ENCODE measurements at regions of chr20 and their contacts with region 1.

Region 1: DNA sequence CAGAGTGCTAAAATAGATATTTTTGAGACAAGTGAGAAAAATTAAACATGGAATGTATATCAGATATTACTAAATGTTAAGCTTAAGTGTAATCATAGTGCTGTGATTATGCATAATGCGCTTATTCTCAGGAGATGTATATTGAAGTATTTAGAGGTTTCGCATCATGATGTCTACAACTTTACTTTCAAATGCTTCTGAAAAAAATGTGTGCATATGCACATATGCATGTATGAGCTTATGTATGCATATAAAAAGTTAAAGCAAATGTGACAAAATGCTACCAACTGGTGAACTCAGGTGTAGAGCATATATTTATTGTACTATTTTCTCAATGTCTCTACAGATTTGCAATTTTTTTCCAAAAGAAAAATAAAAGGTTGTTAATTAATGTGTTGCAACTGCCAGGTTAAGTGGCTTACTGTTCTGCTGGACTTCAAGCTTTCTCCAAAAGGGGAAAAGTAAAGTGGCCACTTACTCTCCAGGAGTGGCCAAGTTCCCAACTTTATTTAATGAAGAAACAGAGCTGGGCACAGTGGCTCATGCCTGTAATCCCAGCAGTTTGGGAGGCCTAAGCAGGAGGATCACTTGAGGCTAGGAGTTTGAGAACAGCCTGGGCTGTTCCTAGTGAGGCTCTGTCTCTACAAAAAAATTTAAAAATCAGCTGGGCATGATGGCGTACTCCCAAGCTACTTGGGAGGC is 48.9 kb downstream of the B4GALT5 start:
- DNase-seq: no peak
- H3K4me3 ChIP-seq: no peak overlapping the region
- H3K27ac ChIP-seq: no peak overlapping the region
- H3K4me1 ChIP-seq: peaks cover 6% of the 10 kb centered on the region
- H3K27me3 ChIP-seq: no peaks in the 10 kb centered on the region
- CTCF ChIP-seq: no peak
- EP300 ChIP-seq: no peak
- POLR2A ChIP-seq: no peak

Region 2: GRCh38 chr20:48669946-48670605 is 994.7 kb before region 1 on chr20:
- intact Hi-C with region 1: no loop called
- DNase-seq: no peak
- H3K4me3 ChIP-seq: no peak overlapping the region
- H3K27ac ChIP-seq: no peak overlapping the region
- H3K4me1 ChIP-seq: peaks cover 9% of the 10 kb centered on the region
- H3K27me3 ChIP-seq: no peaks in the 10 kb centered on the region
- CTCF ChIP-seq: no peak
- EP300 ChIP-seq: no peak
- POLR2A ChIP-seq: no peak

Region 3: DNA sequence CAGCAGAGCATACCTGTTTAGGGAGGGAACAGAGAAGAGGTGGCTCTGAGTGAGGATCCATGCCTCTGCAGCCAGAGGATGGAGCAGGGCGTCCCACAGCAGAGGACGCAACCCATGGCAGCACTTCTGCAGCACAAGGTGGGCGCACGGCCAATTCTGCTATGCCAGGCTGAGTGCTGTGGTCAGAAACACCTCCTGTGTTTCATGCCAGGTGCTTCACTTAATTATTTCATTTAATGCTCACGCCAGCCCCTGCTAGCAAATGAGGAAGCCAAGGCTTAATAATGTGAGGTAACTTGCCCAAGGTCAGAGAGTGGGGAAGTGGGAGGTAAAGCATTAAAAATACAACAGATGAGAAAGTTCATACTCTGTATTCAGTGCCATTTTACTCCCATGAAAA is 28.3 kb before region 1 on chr20:
- intact Hi-C with region 1: loop called in 1 of 4 experiments (anchors 2 kb)
- DNase-seq: peak in 4 of 5 donors; percentile 47 to 68 (median 57)
- H3K4me3 ChIP-seq: no peak overlapping the region
- H3K27ac ChIP-seq: peak overlapping the region in 1 of 2 donors; percentile 77
- H3K4me1 ChIP-seq: peaks cover 27% of the 10 kb centered on the region
- H3K27me3 ChIP-seq: no peaks in the 10 kb centered on the region
- CTCF ChIP-seq: no peak
- EP300 ChIP-seq: no peak
- POLR2A ChIP-seq: no peak

Region 4: DNA sequence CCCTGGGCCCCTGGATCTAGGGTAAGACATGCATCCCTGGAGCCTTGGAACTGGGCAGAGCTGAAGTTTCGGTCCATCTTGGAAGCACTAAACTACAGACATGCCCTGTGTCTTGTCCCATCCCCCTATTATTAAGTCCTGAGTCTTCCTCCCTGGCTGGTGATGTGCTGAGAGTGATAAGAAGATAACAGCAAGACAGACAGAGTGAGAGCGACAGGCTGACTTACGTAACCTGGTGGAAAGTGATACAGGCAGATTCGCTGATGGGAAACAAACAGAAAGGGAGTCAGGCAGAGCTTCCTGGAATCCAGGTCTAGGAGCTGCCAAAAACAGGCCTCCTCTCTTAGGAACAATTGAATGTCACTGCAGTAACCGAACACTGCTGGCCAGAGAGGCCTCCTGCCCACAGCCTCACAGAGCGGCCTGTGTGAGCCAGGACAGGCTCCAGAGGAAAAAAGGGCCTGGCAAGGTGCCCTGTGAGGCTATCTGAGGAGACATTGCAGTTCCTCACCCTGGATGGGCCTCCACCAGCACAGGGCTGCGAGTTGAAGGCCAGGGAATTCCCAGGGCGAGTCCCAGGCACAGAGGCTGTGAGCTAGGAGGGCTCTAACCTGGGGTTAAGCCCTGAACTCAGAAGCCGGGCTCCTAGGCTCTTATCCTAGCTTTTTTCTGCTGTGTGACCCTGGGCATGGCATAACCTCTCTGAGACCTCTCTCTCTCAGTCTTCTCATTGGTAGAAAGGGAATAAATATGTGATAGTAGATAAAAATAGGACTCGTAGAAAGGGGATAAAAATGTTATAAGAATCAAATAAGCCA is 83.2 kb after region 1 on chr20:
- intact Hi-C with region 1: no loop called
- DNase-seq: peak; percentile 82 to 94 (median 94)
- H3K4me3 ChIP-seq: no peak overlapping the region
- H3K27ac ChIP-seq: peak overlapping the region in 1 of 2 donors; percentile 72
- H3K4me1 ChIP-seq: peaks cover 7% of the 10 kb centered on the region
- H3K27me3 ChIP-seq: no peaks in the 10 kb centered on the region
- CTCF ChIP-seq: no peak
- EP300 ChIP-seq: peak; percentile 89
- POLR2A ChIP-seq: no peak